Mammary epithelial cell (primary cell): ENCODE measurements at regions of chr11 and their contacts with region 1.

Region 1: GRCh38 chr11:72413914-72414628 is 20.3 kb downstream of the CLPB start:
- DNase-seq: peak; percentile 62
- H3K4me3 ChIP-seq: no peak overlapping the region
- H3K27ac ChIP-seq: no peak overlapping the region
- H3K4me1 ChIP-seq: no peaks in the 10 kb centered on the region
- H3K27me3 ChIP-seq: no peaks in the 10 kb centered on the region
- CTCF ChIP-seq: peak; percentile 79 to 94

Region 2: DNA sequence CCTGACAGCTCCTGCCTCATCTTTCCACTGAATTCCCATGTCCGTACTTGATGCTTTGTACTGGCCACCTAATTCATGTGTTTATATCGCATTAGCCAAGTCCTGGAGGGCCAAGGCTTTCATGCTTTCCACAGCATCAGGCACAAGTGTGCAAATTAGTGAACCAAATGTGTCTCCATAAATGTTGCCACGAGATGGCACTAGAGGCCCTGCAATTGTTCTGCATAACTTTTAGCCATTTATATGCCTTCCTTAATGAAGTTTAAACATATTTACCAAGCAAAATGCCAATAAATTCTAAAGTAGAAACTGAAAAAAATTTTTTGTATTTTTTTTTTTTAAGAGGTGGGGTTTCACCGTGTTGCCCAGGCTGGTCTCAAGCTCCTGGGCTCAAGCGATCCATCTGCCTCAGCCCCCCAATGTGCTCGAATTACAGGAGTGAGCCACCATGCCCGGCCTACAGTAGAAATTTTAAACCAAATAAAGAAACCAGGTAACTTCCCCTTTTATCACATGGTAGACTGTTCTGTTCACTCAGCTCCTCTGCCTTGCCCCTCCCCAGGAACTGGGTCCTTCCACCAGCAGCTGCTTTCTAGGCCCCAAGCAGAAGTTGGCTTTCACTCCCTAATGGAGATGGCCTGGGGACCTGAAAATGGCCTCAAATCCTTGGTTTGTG is 436.2 kb before region 1 on chr11:
- CTCF ChIA-PET with region 1: no interaction called
- dilution Hi-C with region 1: no loop called
- in situ Hi-C with region 1: no loop called
- intact Hi-C with region 1: loop called (anchors 5 kb)
- DNase-seq: peak; percentile 33
- H3K4me3 ChIP-seq: no peak overlapping the region
- H3K27ac ChIP-seq: no peak overlapping the region
- H3K4me1 ChIP-seq: no peaks in the 10 kb centered on the region
- H3K27me3 ChIP-seq: no peaks in the 10 kb centered on the region
- CTCF ChIP-seq: peak; percentile 67 to 79

Region 3: DNA sequence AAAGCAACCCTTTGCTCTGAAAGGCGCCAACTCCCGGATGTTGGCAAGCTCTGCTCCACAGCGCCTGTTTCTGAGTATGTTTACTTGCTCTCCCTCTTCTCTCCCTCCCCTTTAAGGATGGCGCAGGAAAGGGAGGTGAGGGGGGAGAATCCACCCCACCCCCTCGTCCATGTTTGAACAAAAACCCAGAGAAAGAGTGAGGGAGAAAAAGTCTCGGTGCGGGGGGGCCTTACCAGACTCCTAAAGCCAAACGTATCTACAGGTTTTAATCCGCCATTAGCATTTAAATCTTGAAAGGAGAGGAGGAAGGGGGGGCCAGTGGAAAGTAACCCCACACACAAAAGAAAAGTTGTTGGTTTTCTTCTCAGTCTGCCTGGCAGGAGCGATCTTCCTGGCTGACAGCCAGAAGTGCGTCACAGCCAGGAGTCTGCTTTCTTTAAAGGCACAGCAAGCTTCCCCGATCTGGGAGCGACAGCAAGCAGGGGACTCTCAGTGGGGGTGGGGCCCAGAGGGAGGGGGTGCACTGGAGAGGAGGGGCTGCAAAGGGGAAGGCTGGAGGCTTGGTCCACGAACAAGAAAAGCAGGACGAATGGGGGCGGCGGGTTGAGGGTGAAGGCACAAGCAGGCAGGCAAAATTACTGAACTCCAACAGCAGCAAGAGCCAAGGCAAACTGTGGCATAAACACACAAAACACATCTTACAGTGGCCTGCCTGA is 373.2 kb before region 1 on chr11:
- CTCF ChIA-PET with region 1: no interaction called
- dilution Hi-C with region 1: no loop called
- in situ Hi-C with region 1: loop called in 1 of 2 experiments (anchors 25 kb)
- intact Hi-C with region 1: no loop called
- DNase-seq: peak; percentile 83
- H3K4me3 ChIP-seq: peak overlapping the region; percentile 52 to 66 (median 57)
- H3K27ac ChIP-seq: peak overlapping the region; percentile 78
- H3K4me1 ChIP-seq: peaks cover 44% of the 10 kb centered on the region
- H3K27me3 ChIP-seq: no peaks in the 10 kb centered on the region
- CTCF ChIP-seq: no peak

Region 4: GRCh38 chr11:72222907-72223614 is 191.0 kb before region 1 on chr11:
- CTCF ChIA-PET with region 1: no interaction called
- dilution Hi-C with region 1: no loop called
- in situ Hi-C with region 1: no loop called
- intact Hi-C with region 1: loop called (anchors 1 kb)
- DNase-seq: peak; percentile 87
- H3K4me3 ChIP-seq: peak overlapping the region; percentile 81 to 88 (median 85)
- H3K27ac ChIP-seq: peak overlapping the region; percentile 56
- H3K4me1 ChIP-seq: peaks cover 32% of the 10 kb centered on the region
- H3K27me3 ChIP-seq: no peaks in the 10 kb centered on the region
- CTCF ChIP-seq: peak in 1 of 2 donors; percentile 37

Region 5: DNA sequence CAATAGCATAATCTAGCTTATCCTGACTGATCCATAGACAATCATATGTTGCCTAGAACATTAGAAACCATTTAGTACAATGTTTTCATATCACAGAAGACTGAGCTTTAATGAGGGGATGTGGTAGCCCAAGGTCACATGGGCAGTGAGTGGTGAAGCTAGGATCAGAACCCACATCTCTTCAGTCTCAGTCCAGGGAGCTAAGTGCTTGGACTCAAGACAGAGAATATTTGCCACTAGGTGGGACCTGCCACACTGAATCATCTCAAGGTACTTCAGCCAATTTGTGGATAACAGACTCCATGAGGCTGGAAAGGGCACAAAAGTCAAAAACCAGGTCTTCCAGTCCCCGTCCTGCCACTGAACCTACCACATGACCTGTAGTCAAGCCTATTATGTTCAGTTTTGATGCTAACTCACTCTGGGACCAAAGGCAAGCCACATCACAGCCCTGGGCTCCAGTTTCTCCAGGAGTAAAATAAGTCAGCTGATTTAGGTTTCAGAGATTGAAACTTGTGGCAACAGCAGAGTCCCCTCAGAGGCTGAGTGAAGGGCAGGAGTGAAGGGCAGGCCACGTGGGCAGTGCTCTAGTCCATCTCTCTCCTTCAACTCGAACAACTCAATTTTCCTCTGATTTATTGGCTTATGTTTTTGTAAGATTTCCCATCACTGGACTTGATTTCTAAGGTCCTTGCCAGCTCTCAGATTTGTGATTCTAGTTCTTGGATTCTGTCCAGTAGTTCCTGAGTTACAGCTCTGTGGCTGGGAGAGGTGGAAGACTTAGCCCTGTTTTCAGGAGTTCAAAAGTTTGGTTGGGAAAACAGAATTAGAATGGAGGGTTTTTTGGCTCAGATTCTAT is 85.5 kb before region 1 on chr11:
- CTCF ChIA-PET with region 1: no interaction called
- dilution Hi-C with region 1: loop called (anchors 5 kb)
- in situ Hi-C with region 1: no loop called
- intact Hi-C with region 1: no loop called
- DNase-seq: no peak
- H3K4me3 ChIP-seq: no peak overlapping the region
- H3K27ac ChIP-seq: no peak overlapping the region
- H3K4me1 ChIP-seq: no peaks in the 10 kb centered on the region
- H3K27me3 ChIP-seq: no peaks in the 10 kb centered on the region
- CTCF ChIP-seq: peak in 1 of 2 donors; percentile 10

Region 6: GRCh38 chr11:72353861-72354260 is 60.2 kb before region 1 on chr11:
- CTCF ChIA-PET with region 1: no interaction called
- dilution Hi-C with region 1: no loop called
- in situ Hi-C with region 1: no loop called
- intact Hi-C with region 1: loop called (anchors 1 kb)
- DNase-seq: no peak
- H3K4me3 ChIP-seq: no peak overlapping the region
- H3K27ac ChIP-seq: no peak overlapping the region
- H3K4me1 ChIP-seq: no peaks in the 10 kb centered on the region
- H3K27me3 ChIP-seq: no peaks in the 10 kb centered on the region
- CTCF ChIP-seq: peak; percentile 8 to 51

Region 7: GRCh38 chr11:72625691-72626413 is 211.8 kb after region 1 on chr11:
- CTCF ChIA-PET with region 1: no interaction called
- dilution Hi-C with region 1: no loop called
- in situ Hi-C with region 1: no loop called
- intact Hi-C with region 1: no loop called
- DNase-seq: no peak
- H3K4me3 ChIP-seq: no peak overlapping the region
- H3K27ac ChIP-seq: no peak overlapping the region
- H3K4me1 ChIP-seq: no peaks in the 10 kb centered on the region
- H3K27me3 ChIP-seq: no peaks in the 10 kb centered on the region
- CTCF ChIP-seq: no peak